G401 (cell line): ENCODE measurements at regions of chr11 and their contacts with region 1.

Region 1: DNA sequence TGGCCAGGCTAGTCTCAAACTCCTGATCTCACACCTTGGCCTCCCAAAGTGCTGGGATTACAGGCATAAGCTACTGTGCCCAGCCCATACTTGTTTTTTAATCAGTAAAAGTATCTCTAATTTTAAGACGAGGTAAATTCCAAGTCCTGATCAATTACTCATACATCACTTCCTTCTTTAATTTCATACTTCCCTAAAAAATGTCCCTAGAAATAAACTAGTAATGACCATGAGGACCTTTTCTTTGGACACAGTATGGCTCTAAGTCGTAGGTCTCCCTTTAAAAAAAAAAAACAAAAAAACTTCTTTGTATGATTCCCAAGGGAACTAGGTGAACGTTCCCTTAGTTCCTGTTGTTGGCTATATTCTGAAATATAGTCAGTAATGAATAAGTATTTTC is 29.8 kb downstream of the NUP98 start:
- DNase-seq: no peak

Region 2: GRCh38 chr11:3709977-3710376 is 57.6 kb before region 1 on chr11:
- in situ Hi-C with region 1: loop called (anchors 10 kb)
- DNase-seq: no peak

Region 3: GRCh38 chr11:3797329-3798095 is 30.0 kb after region 1 on chr11 and contains the start of gene NUP98:
- in situ Hi-C with region 1: loop called (anchors 5 kb)
- DNase-seq: peak; percentile 100
- total RNA-seq, gene NUP98: 115 and 150 TPM in 2 replicates